Common myeloid progenitor, CD34-positive (primary cell): ENCODE measurements at regions of chr1 and their contacts with region 1.

Region 1: DNA sequence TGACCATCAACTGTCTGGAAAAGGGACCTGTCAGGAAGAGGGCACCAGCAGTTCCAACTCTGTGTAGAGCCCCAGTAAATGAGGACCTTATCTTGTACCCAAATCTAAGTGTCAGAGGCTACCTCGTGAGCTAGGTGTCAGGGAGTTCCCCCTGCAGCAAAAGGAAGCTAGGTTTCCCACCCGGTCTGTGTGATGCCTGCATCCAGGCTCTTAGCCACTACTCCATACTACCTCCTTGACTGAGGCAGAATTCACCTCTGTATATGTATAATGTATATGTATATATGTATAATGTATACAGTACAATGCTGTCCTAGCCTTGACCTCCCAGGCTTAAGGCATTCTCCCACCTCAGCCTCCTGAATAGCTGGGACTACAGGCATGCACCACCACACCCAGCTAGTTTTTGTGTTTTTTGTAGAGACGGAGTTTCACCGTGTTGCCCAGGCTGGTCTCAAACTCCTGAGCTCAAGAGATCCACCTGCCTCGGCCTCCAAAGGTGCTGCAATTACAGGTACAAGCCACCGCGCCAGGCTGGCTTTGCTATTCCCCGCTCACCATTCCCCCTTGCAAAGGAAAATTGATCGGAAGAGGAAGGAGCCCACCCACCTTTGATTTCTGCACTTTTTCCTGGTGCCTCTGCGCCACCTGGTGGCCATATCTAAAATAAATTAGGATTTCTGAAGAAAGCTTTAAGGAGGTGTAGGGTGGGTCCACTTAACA is 15.7 kb upstream of the LUZP1 start:
- DNase-seq: peak in 2 of 3 donors; percentile 55 to 64
- H3K4me3 ChIP-seq: peak overlapping the region in 4 of 7 experiments; percentile 40 to 66 (median 52)
- H3K27ac ChIP-seq: no peak overlapping the region
- H3K4me1 ChIP-seq: peaks cover 0 to 7% (median 5%) of the 10 kb centered on the region in 4 experiments
- H3K27me3 ChIP-seq: no peaks in the 10 kb centered on the region

Region 2: GRCh38 chr1:23081376-23081775 is 103.0 kb before region 1 on chr1:
- CTCF ChIA-PET with region 1: interaction called, 478 read pairs
- POLR2A ChIA-PET with region 1: no interaction called
- DNase-seq: peak in 2 of 3 donors; percentile 52
- H3K4me3 ChIP-seq: no peak overlapping the region
- H3K27ac ChIP-seq: no peak overlapping the region
- H3K4me1 ChIP-seq: no peaks in the 10 kb centered on the region
- H3K27me3 ChIP-seq: no peaks in the 10 kb centered on the region

Region 3: DNA sequence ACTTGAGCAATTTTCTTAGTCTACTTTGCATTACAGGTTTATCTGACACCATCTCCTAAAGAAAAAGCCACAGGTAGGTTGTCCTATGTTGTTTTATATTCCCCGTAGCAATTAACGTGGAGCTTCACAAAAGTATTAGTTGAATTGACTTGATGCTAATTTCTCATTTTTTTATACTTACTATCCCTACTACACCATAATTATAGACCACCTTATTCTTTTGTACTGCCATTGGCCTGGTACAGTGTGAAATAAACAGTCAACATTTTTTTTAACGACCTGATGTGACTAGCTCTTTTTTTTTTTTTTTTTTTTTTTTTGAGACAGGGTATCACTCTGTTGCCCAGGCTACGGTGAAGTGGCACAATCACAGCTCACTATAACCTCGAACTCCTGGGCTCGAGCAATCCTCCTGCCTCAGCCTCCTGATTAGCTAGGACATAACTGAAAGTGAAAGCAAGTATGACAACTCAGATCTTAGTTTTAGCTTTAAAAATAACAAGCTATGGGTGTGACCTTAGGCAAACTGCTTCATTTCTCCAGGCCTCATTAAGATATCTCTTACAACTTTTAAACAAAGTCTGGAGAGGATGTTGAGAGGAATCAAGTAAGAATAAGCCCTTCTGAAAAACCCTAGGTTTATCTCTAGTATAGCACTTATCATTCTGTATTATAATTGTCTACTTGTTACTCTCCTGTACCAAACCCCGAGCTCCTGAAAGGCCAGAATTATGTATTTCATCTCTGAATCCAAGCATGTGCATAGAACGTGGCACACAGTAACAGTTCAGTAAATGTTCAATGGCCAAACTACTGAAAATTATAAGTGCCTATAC is 65.2 kb before region 1 on chr1:
- CTCF ChIA-PET with region 1: interaction called, 24 read pairs
- POLR2A ChIA-PET with region 1: no interaction called
- DNase-seq: peak in 2 of 3 donors; percentile 75 to 81
- H3K4me3 ChIP-seq: peak overlapping the region in 5 of 7 experiments; percentile 7 to 45 (median 43)
- H3K27ac ChIP-seq: peak overlapping the region; percentile 50 to 87
- H3K4me1 ChIP-seq: peaks cover 0 to 51% (median 32%) of the 10 kb centered on the region in 4 experiments
- H3K27me3 ChIP-seq: no peaks in the 10 kb centered on the region

Region 4: DNA sequence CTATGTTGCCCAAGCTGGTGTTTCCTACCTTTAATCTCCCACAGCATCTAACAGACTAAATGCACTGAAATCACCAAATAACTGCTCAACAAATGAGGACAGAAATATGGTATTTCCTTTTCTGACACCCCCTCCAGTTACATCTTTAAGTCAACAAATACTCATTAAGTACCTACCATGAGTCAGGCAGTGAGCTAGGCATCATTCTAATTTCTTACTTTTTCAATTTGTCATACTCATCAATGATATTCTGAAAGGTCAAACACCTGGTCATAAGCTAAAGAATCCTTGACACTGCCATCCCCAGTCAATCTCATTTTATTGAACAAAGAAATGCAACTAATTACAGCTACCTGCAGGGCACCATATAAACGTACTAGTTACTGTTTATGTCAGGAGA is 52.3 kb before region 1 on chr1:
- CTCF ChIA-PET with region 1: interaction called, 24 read pairs
- POLR2A ChIA-PET with region 1: interaction called, 4 read pairs
- DNase-seq: no peak
- H3K4me3 ChIP-seq: no peak overlapping the region
- H3K27ac ChIP-seq: no peak overlapping the region
- H3K4me1 ChIP-seq: no peaks in the 10 kb centered on the region
- H3K27me3 ChIP-seq: no peaks in the 10 kb centered on the region

Region 5: DNA sequence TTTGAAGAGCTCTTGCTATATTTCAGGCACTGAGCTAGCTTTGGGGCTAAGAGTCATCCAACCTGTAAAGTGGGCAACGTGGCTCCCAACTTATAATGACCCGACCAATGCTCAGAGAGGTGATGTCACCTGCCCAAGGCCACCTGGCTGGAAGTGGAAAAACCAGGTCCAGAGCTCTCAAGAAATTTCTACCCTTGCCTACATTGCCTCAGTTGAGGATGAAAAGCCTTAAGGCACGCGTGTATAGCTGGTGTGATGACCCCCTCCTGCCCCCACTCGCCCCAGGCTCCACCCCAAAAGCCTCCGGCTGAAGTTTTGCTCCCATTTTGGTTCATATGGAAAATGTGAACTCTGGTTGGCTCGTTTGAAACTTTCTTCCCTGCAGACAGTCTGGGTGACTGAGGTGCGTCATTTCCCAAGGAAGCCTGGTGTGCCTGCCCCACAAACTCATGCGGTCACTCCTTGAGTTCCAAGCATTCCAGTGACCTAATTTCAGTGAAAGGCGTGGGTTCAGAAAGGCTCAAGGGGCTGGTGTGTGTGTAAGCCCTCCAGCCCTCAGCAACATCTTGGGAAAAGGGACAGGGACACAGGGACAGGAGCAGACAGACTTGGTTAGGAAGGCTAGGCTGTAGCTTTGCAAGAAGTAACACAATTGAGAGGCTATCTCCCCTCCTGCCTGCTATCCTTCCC is 12.4 kb after region 1 on chr1:
- CTCF ChIA-PET with region 1: interaction called, 38 read pairs
- POLR2A ChIA-PET with region 1: no interaction called
- DNase-seq: no peak
- H3K4me3 ChIP-seq: no peak overlapping the region
- H3K27ac ChIP-seq: no peak overlapping the region
- H3K4me1 ChIP-seq: no peaks in the 10 kb centered on the region
- H3K27me3 ChIP-seq: peaks cover 0 to 3% (median 0%) of the 10 kb centered on the region in 5 experiments

Region 6: DNA sequence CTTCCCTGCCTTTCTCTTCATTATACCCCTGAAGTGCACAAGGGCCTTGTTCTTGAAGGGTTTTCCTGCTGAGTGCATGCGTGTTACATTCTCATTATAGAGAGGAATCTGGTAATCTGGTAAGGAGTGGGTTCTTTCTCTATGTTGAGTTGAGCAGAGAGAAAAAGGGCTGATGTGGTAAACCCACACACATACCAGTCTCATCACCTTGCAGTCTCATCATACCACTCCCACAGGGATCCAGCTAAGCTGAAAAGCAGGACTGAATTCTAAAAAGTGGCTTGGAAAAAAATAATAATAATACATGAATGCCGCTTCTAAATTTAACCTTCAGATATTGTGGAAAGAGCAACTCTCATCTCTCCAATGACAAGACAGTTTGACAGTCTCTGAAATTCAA is 43.4 kb after region 1 on chr1:
- CTCF ChIA-PET with region 1: no interaction called
- POLR2A ChIA-PET with region 1: no interaction called
- DNase-seq: no peak
- H3K4me3 ChIP-seq: no peak overlapping the region
- H3K27ac ChIP-seq: no peak overlapping the region
- H3K4me1 ChIP-seq: no peaks in the 10 kb centered on the region
- H3K27me3 ChIP-seq: peaks cover 0 to 3% (median 0%) of the 10 kb centered on the region in 5 experiments